ENCODE measurements at regions of chr2 and their contacts with region 1.

Region 1: DNA sequence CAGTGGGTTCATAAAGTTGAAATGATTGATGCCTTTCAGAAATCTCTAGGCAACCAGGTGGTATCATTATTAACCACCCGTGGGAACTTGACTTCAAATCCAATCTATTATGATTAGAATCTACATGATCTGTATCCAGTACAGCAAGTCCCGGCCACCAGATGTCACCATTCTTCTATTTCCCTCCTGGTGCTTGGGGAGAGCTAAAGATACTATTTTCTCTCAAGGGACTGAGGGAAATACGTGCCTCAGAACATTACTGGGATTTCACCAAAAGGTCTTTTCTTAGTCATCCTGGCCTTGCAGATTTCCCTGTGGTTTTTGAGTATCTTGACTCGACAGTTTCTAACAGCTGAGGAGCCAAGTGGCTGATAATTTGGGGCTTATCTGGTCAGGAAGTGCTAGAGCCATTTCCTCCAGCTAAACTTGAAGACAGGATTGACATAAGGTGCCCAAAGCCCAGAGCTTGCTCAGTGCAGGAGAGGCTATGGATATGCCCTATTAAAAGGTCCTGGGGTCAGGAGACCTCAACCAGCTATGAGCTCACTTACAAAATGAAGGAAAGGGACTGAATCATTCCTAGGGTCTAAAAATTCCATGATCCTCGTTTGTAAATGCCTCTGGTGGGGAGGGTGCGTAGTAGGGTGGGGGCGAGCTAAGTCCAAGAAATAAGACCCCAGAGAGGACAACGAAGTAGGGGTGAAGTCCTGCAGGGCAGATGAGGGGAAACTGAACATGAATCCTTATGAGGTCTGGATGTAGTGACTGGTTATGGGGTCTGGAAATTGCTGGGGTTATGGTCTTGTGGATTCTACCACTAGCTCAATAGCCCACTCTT is 135.4 kb upstream of the MGAT5 start:
- DNase-seq: peak; percentile 72
- CTCF ChIP-seq: peak; percentile 69

Region 2: GRCh38 chr2:134108113-134108512 is 10.4 kb before region 1 on chr2:
- CTCF ChIA-PET with region 1: interaction called, 27 read pairs
- POLR2A ChIA-PET with region 1: no interaction called
- DNase-seq: no peak
- CTCF ChIP-seq: no peak

Region 3: DNA sequence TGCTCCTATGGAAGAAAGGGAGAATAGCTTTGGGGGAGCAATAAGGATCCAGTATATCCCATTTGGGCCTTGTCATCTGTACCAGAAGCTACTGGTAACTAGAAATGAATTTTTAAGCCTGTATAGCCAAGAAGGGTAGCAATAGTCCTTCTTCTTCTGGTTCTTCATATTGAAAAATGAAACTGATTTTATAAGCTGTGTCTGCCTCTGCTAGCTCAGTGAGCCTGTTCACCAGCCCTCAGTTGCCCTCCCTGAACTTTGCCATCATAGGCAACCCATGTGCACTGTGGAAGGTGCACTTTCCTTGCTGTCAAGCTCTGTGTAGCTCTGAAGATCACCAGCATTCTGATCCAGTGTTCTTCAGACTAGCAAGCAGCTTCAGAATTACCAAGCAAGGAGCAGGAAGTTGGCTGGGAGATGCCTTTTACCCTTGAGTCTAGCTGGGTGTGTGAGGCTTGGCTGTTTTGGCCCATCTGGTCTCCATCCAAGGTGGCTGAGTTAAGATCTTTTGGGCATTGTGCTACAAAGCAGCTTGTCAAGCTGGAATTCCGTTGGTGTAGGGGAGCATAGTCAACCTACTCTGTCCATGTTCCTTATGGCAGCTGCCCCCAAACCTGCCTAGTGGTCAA is 79.6 kb after region 1 on chr2:
- CTCF ChIA-PET with region 1: interaction called, 110 read pairs
- POLR2A ChIA-PET with region 1: no interaction called
- DNase-seq: no peak
- CTCF ChIP-seq: no peak

Region 4: DNA sequence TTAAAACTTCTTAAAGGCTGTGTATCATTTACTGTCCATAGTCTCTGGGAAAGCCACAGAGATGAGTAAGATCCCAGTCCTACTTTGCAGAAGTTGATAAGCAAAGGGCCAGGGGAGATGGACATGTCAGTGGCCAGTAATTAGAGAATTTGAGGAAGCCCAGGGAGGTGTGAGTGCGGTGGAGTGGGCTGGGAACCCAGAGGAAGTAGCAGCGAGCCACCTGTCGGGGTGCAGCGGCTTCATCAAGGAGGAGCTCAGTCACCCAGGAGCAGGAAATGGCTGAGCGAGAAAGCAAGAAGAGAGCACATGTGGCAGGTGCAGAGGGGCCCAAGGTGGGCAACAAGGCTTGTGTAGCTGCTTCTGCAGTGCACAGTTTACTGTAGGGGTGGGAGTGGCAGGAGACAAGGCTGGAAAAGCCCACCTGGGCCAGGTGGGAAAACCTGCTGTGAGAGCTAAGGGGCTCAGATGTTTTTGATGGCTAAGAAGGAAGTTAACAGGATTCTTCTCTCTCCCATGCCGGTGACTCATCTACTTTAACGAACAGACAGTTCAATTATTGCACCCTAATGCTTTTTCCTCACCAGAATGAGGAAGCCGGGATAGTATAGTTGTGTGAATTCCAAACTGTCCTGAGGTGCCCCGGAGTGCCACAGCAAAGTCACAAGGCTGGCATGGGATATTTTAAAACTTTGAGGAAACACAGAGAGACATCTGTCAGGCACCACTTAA is 100.6 kb after region 1 on chr2:
- CTCF ChIA-PET with region 1: interaction called, 12 read pairs
- POLR2A ChIA-PET with region 1: interaction called, 3 read pairs
- DNase-seq: no peak
- CTCF ChIP-seq: no peak

Region 5: DNA sequence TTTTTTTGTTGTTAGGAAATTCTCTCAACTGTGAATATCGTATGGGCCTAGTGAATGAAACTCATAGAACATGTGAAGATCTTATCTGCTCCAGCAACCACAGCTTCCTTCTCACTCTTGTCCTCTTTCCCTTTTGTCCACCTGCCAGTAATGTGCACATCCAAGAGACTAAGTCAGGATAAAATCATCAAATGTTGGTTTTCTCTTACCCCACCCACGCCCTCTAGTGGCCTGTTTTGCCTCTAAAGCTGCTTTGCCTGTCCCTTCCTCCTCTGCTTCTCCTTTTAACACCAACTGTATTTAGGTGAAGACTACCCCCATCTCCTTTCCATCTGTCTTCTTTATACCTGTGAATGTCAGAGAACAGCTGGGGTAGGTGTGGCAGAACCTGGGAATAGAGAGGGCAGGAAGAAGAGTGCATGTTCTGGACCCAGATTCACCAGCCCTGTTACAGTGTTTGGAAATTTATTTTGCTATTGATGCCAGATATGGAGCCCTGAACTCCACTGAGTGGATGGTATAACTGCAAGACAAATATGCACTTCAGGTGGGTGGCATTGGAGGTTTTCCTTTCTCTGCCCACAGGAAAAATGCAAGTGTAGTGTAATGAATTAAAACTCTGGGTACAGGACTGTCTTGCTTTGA is 127.0 kb after region 1 on chr2:
- CTCF ChIA-PET with region 1: interaction called, 90 read pairs
- POLR2A ChIA-PET with region 1: no interaction called
- DNase-seq: no peak
- CTCF ChIP-seq: peak; percentile 72

Region 6: GRCh38 chr2:134402410-134402809 is 283.9 kb after region 1 on chr2:
- CTCF ChIA-PET with region 1: interaction called, 10 read pairs
- POLR2A ChIA-PET with region 1: no interaction called
- DNase-seq: no peak
- CTCF ChIP-seq: no peak

Measured in GM10248 (cell line).